ENCODE measurements at regions of chr18 and their contacts with region 1.

Region 1: GRCh38 chr18:21191596-21192307 is 50.3 kb upstream of the GREB1L start:
- H3K4me3 ChIP-seq: no peak overlapping the region
- H3K27ac ChIP-seq: no peak overlapping the region
- H3K4me1 ChIP-seq: no peaks in the 10 kb centered on the region
- CTCF ChIP-seq: peak; percentile 53

Region 2: DNA sequence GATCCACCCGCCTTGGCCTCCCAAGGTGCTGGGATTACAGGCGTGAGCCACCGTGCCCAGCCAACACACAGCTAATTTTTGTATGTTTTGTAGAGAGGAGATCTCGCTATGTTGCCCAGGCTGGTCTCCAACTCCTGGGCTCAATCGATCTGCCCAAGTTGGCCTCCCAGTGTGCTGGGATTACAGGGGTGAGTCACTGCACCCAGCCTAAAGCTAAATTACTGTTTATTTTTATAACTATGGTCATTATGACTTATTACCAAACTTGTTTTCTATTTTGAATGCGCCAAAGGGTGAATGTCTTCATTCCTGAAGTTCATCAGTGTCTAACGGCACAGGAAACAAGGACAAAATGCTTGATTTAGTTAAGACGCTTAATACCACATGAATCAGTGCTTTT is 11.3 kb after region 1 on chr18:
- CTCF ChIA-PET with region 1: interaction called, 19 read pairs
- POLR2A ChIA-PET with region 1: no interaction called
- H3K4me3 ChIP-seq: no peak overlapping the region
- H3K27ac ChIP-seq: no peak overlapping the region
- H3K4me1 ChIP-seq: no peaks in the 10 kb centered on the region
- CTCF ChIP-seq: no peak

Region 3: GRCh38 chr18:21265971-21266673 is 74.4 kb after region 1 on chr18:
- CTCF ChIA-PET with region 1: no interaction called
- POLR2A ChIA-PET with region 1: no interaction called
- H3K4me3 ChIP-seq: no peak overlapping the region
- H3K27ac ChIP-seq: no peak overlapping the region
- H3K4me1 ChIP-seq: peaks cover 44% of the 10 kb centered on the region
- CTCF ChIP-seq: no peak

Region 4: GRCh38 chr18:21444465-21445023 is 252.8 kb after region 1 on chr18:
- CTCF ChIA-PET with region 1: interaction called, 112 read pairs
- POLR2A ChIA-PET with region 1: no interaction called
- H3K4me3 ChIP-seq: no peak overlapping the region
- H3K27ac ChIP-seq: no peak overlapping the region
- H3K4me1 ChIP-seq: no peaks in the 10 kb centered on the region
- CTCF ChIP-seq: peak; percentile 85

Region 5: DNA sequence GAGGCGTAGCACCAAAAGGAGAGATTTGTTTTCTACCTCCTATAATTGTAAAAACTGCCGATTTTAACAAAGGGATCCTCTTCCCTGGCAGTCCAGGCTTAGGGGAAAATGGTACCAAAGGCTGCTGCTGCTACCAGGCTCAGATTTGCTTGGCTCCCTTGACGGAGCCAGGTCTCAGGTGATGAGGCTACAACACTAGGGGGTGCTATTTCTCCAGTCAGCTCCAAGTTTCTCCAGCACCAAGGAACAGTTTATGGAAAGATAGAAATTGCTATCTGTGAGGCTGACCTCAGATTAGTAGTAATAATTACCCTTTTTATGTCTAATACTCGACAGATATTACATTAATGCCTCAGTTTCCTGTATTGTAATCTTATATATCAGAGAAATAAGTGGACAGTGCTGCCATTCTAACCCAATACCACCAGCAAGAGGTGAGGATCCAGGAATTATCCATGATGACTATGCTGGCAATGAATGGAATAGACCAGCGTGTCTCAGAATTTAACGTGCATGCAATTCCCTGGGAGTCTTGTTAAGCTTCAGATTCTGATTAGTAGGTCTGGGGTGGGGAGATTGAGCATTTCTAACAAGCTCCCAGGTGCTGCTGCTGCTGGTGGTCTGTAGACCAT is 297.5 kb after region 1 on chr18:
- CTCF ChIA-PET with region 1: interaction called, 13 read pairs
- POLR2A ChIA-PET with region 1: no interaction called
- H3K4me3 ChIP-seq: no peak overlapping the region
- H3K27ac ChIP-seq: no peak overlapping the region
- H3K4me1 ChIP-seq: peaks cover 5% of the 10 kb centered on the region; the same call in 1 of the 2 replicates
- CTCF ChIP-seq: no peak

Region 6: DNA sequence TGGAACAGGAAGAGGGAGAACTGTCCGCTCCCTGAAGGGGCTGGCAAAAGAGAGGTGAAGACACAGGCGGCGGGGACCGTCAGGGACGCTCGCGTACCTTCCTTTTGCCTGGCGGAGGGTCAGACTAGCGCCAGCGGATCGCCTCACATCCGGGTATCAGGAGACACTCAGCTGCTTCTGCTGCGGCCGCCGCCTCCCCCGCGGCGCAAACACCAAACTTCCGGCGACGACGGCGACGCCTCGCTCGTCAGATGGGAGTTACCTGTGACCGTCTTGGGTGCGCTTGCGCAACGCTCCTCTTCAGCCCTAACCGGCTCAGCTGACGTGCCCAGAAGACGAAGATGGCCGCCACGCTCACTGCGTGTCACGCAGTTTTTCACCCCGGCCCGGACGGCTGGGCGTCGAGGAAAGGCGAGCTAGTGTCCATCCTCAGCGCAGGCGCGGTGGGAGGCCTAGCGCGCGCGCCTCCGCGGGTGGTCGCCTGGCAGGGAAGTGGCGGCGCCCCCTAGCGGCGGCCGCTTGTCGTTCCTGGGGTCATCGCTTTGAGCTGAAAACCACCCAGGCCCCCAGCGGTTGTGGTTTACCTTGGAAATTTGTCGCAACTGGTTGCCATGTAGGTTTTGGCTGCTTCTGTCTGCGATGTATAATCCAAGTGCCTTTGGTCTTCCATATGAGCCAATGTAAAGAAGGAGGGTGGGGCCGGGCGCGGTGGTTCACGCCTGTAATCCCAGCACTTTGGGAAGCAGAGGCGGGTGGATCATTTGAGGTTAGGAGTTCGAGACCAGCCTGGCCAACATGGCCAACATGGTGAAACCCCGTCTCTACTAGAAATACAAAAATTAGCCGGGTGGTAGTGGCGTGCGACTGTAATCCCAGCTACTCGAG is 409.0 kb after region 1 on chr18 and contains the start of gene ESCO1:
- CTCF ChIA-PET with region 1: interaction called, 14 read pairs
- POLR2A ChIA-PET with region 1: no interaction called
- H3K4me3 ChIP-seq: peak within 1 kb of the TSS; percentile 91
- H3K27ac ChIP-seq: peak within 1 kb of the TSS; percentile 80
- H3K4me1 ChIP-seq: 0 out of 2 replicates have a peak, but pooled peaks cover 4% of the 10 kb centered on the region
- CTCF ChIP-seq: peak; percentile 100

Region 7: DNA sequence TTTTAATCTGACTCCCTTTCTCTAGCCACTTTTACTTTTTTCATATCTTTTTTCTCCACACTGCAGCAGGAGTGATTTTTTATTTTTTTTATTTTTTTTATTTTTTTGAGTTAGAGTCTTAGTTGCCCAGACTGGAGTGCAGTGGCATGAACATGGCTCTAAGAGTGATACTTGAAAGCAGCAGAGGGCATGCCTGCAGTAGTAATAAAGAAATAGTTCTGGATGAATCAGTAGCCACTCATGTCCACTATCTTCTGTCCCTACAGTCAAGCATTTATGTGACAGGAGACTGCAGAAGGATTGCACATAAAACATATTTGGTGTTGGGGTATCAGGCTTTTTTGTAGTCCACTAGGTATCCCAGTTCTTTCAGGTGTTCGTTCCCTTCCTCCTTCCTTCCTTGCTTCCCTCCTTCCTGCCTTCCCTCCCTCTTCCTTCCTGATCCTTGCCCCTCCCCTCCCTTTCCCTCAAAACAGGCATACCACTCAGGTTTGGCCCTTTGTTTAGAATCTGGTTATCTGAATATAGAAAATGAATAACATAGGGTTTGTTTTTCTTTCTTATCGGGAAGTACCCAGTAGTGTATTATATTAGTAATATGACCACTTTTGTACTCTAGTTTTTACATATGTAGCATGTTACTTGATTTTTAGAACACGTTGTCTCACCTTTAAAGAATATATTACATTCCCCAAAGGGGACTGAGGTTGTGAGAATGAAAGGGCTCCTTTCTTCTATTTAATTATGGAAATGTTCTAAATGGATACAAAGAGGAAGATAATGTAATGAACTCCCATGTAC is 572.3 kb after region 1 on chr18:
- CTCF ChIA-PET with region 1: no interaction called
- POLR2A ChIA-PET with region 1: no interaction called
- H3K4me3 ChIP-seq: no peak overlapping the region
- H3K27ac ChIP-seq: no peak overlapping the region
- H3K4me1 ChIP-seq: peaks cover 31% of the 10 kb centered on the region
- CTCF ChIP-seq: no peak